ENCODE measurements at regions of chr4 and their contacts with region 1.

Region 1: DNA sequence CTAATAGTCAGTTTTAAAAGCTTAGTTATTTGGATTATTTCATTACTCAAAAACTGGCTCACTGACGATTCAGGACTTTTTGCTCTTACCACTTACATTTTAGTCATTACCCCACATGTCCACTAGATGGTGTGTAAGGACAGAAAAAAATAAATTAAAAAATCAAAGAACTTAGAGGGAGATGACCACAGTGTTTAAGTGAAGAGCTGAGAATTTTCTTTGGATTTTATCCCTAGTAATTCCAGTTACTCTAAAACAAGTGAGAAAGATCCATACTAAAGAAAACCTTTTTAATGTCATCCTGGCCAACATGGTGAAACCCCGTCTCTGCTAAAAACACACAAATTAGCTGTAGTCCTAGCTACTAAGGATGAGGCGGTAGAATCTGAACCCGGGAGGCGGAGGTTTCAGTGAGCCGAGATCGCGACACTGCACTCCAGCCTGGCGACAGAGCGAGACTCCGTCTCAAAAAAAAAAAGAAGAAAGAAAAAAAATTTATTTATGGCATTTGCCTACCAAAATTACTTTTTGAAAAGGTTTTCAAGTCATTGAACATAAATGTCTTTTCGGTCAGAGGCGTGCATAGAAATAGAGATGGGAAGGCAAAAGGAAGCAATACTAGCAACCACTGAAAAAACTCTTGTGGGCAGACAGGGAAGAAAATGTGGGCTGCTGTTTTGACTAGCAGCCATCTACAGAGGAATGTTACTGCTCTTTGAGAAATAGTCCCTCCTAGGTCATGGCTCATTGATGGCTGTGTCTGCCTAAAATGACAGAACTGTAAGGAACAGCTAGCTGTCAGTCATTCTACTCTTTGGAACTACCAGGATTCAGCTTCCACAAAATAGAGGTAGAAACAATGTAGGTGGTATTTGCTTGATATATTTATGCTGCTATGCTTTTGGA is 26.6 kb upstream of the TMPRSS11B start:
- DNase-seq: no peak
- ATAC-seq: peak; percentile 44

Region 2: GRCh38 chr4:68375667-68376559 is 103.8 kb after region 1 on chr4:
- intact Hi-C with region 1: loop called (anchors 1 kb)
- DNase-seq: no peak
- ATAC-seq: peak; percentile 65

Region 3: GRCh38 chr4:68820770-68821169 is 548.7 kb after region 1 on chr4:
- intact Hi-C with region 1: no loop called
- DNase-seq: no peak
- ATAC-seq: no peak